ENCODE measurements at regions of chr10 and their contacts with region 1.

Region 1: DNA sequence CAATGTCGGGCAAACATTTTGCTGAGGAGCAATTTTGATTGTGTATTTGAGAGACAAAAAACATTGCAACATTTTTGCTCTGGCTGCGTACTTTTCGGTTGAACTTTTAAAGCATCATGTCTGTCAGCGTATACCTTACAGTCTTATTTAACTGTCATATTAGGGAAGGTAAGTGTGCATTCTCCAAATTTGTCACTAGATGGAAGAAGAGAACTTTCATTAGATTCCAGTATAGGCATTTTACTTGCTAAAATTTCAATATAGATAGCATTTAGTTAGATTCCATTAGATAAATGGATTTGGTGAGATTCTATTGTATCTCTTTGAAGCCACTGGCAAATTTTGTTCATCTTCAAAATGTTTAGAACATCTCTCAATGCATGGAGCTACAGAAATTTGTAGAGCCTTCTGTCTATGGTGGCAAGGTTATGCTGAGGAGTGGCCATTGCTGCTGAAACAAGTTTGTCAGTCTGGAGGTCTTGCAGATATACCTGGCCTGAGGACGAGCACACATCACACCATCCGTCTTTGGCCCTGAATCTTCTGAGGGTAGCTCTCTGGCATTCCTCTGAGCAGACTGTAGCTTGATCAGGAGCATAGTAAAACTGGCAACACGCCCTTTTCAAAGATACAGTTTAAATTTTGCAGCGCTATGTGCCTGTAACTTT is 437.5 kb upstream of the MBL2 start:
- DNase-seq: peak; percentile 8
- H3K27ac ChIP-seq: no peak overlapping the region
- CTCF ChIP-seq: no peak

Region 2: DNA sequence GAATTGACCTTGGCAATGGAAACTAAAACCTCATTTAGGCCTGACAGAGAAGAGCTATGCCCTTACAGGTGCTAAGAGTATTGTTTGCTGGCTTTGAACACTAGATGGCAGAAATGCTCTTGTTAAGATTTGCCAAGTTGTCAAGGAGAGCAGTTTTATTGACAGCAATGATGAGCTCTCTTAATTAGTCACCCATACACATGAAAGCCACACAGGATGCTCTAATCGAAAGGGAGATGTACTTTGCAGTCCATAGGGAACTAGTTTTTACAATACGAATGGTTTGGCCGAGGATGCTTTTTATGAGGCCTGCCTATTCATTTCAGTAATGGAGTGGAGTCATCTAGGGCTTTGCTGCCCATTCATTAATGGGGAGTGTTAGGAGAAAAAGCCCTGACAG is 392.1 kb before region 1 on chr10:
- CTCF ChIA-PET with region 1: interaction called, 11 read pairs
- POLR2A ChIA-PET with region 1: no interaction called
- DNase-seq: peak; percentile 44
- H3K27ac ChIP-seq: no peak overlapping the region
- CTCF ChIP-seq: peak; percentile 71

Region 3: DNA sequence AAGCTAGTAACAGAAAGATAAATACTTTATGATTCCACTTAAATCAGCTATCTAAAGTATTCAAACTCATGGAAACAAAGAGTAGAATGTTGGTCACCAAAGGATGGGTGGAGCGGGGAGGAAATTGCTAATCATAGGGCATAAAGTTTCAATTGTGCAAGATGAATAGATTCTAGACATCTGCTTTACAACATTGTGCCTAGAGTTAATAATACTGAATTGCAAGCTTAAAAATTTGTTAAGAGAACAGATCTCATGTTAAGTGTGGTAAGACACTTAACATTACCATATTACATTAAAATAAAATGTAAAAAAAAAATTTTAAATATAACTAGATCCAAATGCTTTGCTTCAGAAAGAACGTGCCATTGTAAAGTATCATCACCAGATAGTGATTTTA is 26.3 kb before region 1 on chr10:
- CTCF ChIA-PET with region 1: no interaction called
- POLR2A ChIA-PET with region 1: no interaction called
- DNase-seq: no peak
- H3K27ac ChIP-seq: no peak overlapping the region
- CTCF ChIP-seq: no peak

Region 4: GRCh38 chr10:53298443-53298842 is 88.4 kb after region 1 on chr10:
- CTCF ChIA-PET with region 1: no interaction called
- POLR2A ChIA-PET with region 1: no interaction called
- DNase-seq: no peak
- H3K27ac ChIP-seq: no peak overlapping the region
- CTCF ChIP-seq: no peak